ENCODE measurements at regions of chr10 and their contacts with region 1.

Region 1: GRCh38 chr10:69408318-69409175 is 8.2 kb downstream of the TACR2 start:
- DNase-seq: peak; percentile 93
- H3K4me3 Mint-ChIP-seq: peak overlapping the region; percentile 58
- H3K27ac Mint-ChIP-seq: no peak overlapping the region
- H3K4me1 Mint-ChIP-seq: peaks cover 12% of the 10 kb centered on the region
- H3K27me3 Mint-ChIP-seq: no peaks in the 10 kb centered on the region

Region 2: GRCh38 chr10:68955832-68956532 is 452.6 kb before region 1 on chr10 and contains the start of gene DDX21:
- CTCF ChIA-PET with region 1: no interaction called
- intact Hi-C with region 1: loop called (anchors 1 kb)
- DNase-seq: peak; percentile 94
- H3K4me3 Mint-ChIP-seq: peak within 1 kb of the TSS; percentile 100
- H3K27ac Mint-ChIP-seq: peak within 1 kb of the TSS; percentile 100
- H3K4me1 Mint-ChIP-seq: peaks cover 44% of the 10 kb centered on the region
- H3K27me3 Mint-ChIP-seq: no peaks in the 10 kb centered on the region
- total RNA-seq, gene DDX21: 155 to 164 TPM

Region 3: DNA sequence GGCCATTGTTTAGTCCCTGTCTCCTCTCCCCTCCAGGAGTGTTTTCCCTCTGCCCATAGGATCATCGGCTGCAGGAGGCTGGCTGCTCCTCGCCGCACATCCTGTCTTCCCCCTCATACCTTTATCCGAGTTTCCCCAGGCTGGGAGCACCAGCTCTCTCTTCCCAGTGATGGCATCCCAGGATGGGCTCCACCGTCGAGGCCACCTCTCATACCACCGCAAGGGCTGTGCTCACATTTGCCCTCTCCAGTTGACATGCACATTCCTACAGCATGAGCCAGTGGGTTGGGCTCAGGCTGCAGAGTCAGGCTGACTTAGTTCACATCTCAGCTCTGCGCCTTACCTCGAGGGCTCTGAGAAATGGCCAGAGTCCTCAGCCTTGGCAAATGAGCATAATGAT is 176.3 kb before region 1 on chr10:
- CTCF ChIA-PET with region 1: interaction called, 52 read pairs
- intact Hi-C with region 1: loop called (anchors 1 kb)
- DNase-seq: no peak
- H3K4me3 Mint-ChIP-seq: no peak overlapping the region
- H3K27ac Mint-ChIP-seq: no peak overlapping the region
- H3K4me1 Mint-ChIP-seq: peaks cover 42% of the 10 kb centered on the region
- H3K27me3 Mint-ChIP-seq: no peaks in the 10 kb centered on the region

Region 4: DNA sequence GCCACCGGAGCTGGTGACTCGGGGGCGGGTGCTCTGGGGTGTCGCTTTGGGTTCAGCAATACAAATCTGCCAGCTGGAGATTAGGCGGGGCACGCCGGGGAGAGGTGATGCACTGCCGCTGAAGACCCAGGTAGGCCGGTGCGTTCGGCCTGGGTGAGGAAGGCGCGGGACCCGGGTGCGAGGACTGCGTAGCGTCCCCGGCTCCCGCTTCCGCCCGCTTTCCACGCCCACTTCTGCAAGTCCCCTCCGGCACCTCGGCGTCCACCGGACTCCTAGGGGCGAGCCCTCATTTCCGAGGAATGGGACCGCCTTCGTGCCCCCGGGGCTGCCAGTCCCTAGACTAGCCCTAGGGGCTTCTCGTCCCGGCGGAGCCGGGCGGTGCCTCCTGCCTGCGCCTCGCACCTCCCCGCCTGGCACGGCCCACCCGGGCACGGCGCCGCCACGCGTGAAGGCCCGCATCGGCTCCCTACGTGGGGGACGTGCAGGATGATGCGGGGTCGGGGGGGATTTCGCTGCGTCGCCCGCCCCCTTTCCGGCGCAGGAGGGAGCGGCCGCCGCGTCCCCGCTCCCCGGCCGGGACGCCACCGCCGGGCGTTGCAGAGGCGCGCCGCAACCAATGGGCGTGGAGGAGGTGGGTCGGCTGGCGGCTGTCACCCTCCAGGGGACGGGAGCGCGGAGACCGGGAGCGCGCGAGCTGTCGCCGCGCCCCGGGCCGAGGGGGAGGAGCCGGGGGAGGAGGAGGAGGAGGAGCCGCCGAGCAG is 90.3 kb before region 1 on chr10:
- CTCF ChIA-PET with region 1: interaction called, 3 read pairs
- intact Hi-C with region 1: loop called (anchors 1 kb)
- DNase-seq: peak; percentile 93
- H3K4me3 Mint-ChIP-seq: peak overlapping the region; percentile 98
- H3K27ac Mint-ChIP-seq: peak overlapping the region; percentile 93
- H3K4me1 Mint-ChIP-seq: peaks cover 46% of the 10 kb centered on the region
- H3K27me3 Mint-ChIP-seq: no peaks in the 10 kb centered on the region

Region 5: GRCh38 chr10:69425511-69426298 is 17.2 kb after region 1 on chr10:
- CTCF ChIA-PET with region 1: interaction called, 4 read pairs
- intact Hi-C with region 1: loop called (anchors 1 kb)
- DNase-seq: peak; percentile 24
- H3K4me3 Mint-ChIP-seq: no peak overlapping the region
- H3K27ac Mint-ChIP-seq: no peak overlapping the region
- H3K4me1 Mint-ChIP-seq: peaks cover 43% of the 10 kb centered on the region
- H3K27me3 Mint-ChIP-seq: no peaks in the 10 kb centered on the region

Region 6: GRCh38 chr10:69515699-69516259 is 107.2 kb after region 1 on chr10:
- CTCF ChIA-PET with region 1: interaction called, 13 read pairs
- intact Hi-C with region 1: no loop called
- DNase-seq: peak; percentile 87
- H3K4me3 Mint-ChIP-seq: no peak overlapping the region
- H3K27ac Mint-ChIP-seq: no peak overlapping the region
- H3K4me1 Mint-ChIP-seq: no peaks in the 10 kb centered on the region
- H3K27me3 Mint-ChIP-seq: no peaks in the 10 kb centered on the region

Region 7: DNA sequence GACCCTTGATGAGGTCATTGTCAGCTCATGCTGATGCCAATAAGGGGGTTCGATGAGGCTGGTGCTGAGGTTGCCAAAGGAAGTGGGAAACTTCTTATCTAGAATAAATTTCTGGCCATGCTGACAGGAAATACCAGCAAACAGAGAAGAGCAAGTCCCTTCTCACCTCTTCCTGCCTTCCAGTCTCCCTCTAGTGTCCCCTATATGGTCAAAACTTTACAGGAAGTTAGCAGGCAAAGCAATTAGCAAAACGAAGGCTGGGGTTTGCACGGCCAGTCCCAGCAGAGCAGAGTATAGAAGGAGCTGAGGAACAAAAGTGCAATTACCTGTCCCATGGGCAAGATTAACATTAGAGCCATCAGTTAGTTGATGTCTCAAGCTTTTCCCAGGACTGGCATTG is 179.8 kb after region 1 on chr10:
- CTCF ChIA-PET with region 1: no interaction called
- intact Hi-C with region 1: no loop called
- DNase-seq: no peak
- H3K4me3 Mint-ChIP-seq: no peak overlapping the region
- H3K27ac Mint-ChIP-seq: no peak overlapping the region
- H3K4me1 Mint-ChIP-seq: peaks cover 12% of the 10 kb centered on the region
- H3K27me3 Mint-ChIP-seq: no peaks in the 10 kb centered on the region

Region 8: GRCh38 chr10:69639291-69640195 is 231.0 kb after region 1 on chr10:
- CTCF ChIA-PET with region 1: interaction called, 5 read pairs
- intact Hi-C with region 1: loop called (anchors 2 kb)
- DNase-seq: peak; percentile 80
- H3K4me3 Mint-ChIP-seq: no peak overlapping the region
- H3K27ac Mint-ChIP-seq: no peak overlapping the region
- H3K4me1 Mint-ChIP-seq: no peaks in the 10 kb centered on the region
- H3K27me3 Mint-ChIP-seq: peaks cover 1% of the 10 kb centered on the region